Activated naive CD4-positive, alpha-beta T cell treated with anti-CD3 and anti-CD28 coated beads for 36 hours (primary cell): ENCODE measurements at regions of chr19 and their contacts with region 1.

Region 1: DNA sequence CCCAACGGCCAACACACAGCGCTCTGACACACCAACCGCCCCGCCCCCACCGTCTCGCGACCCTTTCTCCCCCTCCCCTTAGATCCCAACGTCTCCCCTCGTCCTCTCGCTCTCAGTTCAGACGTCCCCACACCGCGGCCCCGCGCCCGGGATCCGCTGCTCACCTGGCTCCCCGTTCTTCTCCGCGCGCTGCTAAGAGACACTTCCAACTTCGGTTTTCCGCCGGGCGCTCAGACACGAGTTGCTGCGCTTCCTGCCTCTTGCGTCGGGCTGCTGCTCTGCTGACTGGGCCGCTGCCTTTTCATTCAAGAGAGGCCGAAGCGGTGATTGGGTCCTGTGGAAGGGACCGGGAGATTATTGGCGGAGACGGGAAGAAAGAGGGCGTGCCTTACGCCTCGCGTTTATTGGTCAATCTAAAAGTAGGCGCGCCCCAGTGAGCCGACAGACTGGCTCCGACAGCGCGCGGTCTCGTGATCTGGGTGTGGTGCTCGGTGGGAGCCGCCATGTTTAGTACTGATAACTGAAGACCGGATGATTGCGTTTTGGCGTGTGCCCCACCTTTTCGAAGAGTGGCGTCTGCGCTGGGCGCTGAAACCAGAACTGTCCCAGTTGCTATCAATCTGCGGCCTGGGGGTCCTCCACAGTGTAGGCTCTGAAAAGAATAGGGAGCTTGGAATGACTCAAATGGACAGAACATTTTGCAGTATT is at the start of gene DDX39A:
- DNase-seq: peak; percentile 99
- H3K4me3 Mint-ChIP-seq: peak within 1 kb of the TSS; percentile 100
- H3K27ac Mint-ChIP-seq: peak within 1 kb of the TSS; percentile 100
- H3K4me1 Mint-ChIP-seq: peaks cover 32% of the 10 kb centered on the region
- H3K27me3 Mint-ChIP-seq: no peaks in the 10 kb centered on the region
- total RNA-seq, gene DDX39A: 219 to 227 TPM

Region 2: GRCh38 chr19:14337510-14337909 is 81.8 kb before region 1 on chr19:
- CTCF ChIA-PET with region 1: no interaction called
- intact Hi-C with region 1: no loop called
- DNase-seq: peak; percentile 32
- H3K4me3 Mint-ChIP-seq: no peak overlapping the region
- H3K27ac Mint-ChIP-seq: no peak overlapping the region
- H3K4me1 Mint-ChIP-seq: peaks cover 15% of the 10 kb centered on the region
- H3K27me3 Mint-ChIP-seq: no peaks in the 10 kb centered on the region

Region 3: DNA sequence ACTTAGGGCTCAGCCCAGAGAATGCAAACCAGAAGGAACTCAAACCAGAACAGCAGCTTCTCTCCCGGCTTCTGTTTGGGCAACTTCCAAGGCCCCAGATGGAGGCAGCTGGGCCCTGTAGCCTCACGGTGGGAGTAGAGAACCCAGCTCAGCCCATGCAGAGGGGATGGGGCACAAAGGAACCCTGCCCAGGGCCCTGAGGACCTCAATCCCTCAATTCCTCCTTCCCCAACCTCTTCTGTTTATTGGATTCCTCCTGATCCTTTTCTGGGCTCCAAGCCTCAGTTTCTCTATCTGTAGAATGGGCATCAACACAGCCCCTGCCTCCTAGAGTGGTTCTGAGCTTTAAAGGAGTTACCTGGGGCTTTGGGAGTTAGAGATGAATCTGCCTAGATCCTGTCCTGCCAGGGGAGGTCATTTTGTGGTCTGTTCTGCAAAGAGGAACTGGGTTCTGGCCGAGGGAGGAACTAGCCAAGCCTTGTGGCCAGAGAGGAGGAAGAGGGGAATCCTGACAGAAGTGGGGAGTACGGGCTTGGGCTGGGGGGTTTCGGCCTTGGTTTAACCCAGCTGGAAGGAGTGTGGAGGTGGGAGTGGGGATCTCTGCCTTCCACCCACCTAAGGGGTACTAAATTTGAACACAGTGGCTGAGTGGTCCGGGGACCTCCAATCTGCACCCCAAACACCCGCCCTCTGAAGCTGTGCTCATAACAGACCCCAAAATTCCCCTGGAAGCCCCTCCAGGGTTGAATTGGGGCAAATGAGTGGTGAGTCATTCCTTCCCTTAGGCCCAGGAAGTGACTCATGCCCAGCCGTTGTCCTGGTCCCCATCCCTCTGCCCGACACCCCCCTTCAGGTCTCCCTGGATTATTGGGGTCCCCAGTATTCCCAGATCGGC is 35.4 kb before region 1 on chr19:
- CTCF ChIA-PET with region 1: no interaction called
- intact Hi-C with region 1: loop called (anchors 1 kb)
- DNase-seq: peak; percentile 79
- H3K4me3 Mint-ChIP-seq: peak overlapping the region; percentile 97
- H3K27ac Mint-ChIP-seq: peak overlapping the region; percentile 100
- H3K4me1 Mint-ChIP-seq: peaks cover 36% of the 10 kb centered on the region
- H3K27me3 Mint-ChIP-seq: no peaks in the 10 kb centered on the region

Region 4: GRCh38 chr19:14405758-14406644 is 13.3 kb before region 1 on chr19:
- CTCF ChIA-PET with region 1: interaction called, 6 read pairs
- intact Hi-C with region 1: loop called (anchors 1 kb)
- DNase-seq: peak; percentile 91
- H3K4me3 Mint-ChIP-seq: no peak overlapping the region
- H3K27ac Mint-ChIP-seq: peak overlapping the region; percentile 46
- H3K4me1 Mint-ChIP-seq: peaks cover 26% of the 10 kb centered on the region
- H3K27me3 Mint-ChIP-seq: no peaks in the 10 kb centered on the region

Region 5: DNA sequence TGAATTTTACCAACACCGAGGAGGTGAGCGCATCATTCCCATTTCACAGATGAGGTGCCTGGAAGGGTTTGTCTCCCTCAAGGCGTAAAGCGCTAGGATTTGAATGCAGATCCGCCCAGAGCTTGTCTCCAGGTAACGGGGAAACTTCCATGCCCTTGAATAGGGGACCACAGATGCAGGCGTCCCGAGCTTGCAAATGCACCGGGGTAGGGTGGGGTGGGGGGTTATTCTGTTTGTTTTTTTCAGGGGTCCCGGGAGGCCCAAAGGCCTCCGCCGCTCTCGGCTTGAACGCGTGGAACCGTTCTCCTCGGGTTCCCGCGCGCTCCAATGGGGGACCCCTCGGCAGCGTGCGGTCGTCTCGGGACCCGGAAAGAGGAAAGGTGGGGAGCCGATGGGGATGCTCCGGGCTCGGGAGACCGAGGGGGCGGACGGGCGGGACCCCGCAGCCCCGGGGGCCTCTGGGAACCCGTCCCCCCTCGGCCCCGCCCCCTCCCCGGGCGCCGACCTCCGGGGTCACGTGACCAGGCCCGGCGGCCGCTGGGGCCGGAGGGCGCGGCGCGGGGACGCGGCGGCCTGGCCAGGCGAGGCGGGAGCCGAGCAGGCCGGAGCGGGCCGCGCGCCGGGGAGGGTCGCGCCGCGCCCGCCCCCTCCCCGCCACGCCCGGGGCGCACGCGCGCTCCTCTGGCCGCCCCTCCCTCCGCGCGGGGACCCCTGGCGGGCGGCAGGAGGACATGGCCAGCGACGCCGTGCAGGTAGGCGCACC is 13.7 kb after region 1 on chr19 and contains the start of gene PKN1:
- CTCF ChIA-PET with region 1: interaction called, 15 read pairs
- intact Hi-C with region 1: loop called (anchors 2 kb)
- DNase-seq: peak; percentile 33
- H3K4me3 Mint-ChIP-seq: peak within 1 kb of the TSS; percentile 78
- H3K27ac Mint-ChIP-seq: peak within 1 kb of the TSS; percentile 79
- H3K4me1 Mint-ChIP-seq: peaks cover 37% of the 10 kb centered on the region
- H3K27me3 Mint-ChIP-seq: no peaks in the 10 kb centered on the region
- total RNA-seq, gene PKN1: 159 to 164 TPM

Region 6: GRCh38 chr19:14440049-14440448 is 20.8 kb after region 1 on chr19:
- CTCF ChIA-PET with region 1: no interaction called
- intact Hi-C with region 1: loop called (anchors 1 kb)
- DNase-seq: peak; percentile 91
- H3K4me3 Mint-ChIP-seq: peak overlapping the region; percentile 83
- H3K27ac Mint-ChIP-seq: peak overlapping the region; percentile 93
- H3K4me1 Mint-ChIP-seq: peaks cover 48% of the 10 kb centered on the region
- H3K27me3 Mint-ChIP-seq: no peaks in the 10 kb centered on the region